BJ (cell line): ENCODE measurements at regions of chr6 and their contacts with region 1.

Region 1: GRCh38 chr6:137830511-137830911 is 36.5 kb upstream of the TNFAIP3 start:
- DNase-seq: no peak
- H3K4me3 ChIP-seq: no peak overlapping the region
- H3K27me3 ChIP-seq: no peaks in the 10 kb centered on the region
- CTCF ChIP-seq: no peak

Region 2: GRCh38 chr6:137722749-137723272 is 107.7 kb before region 1 on chr6:
- CTCF ChIA-PET with region 1: no interaction called
- POLR2A ChIA-PET with region 1: interaction called, 11 read pairs
- DNase-seq: no peak
- H3K4me3 ChIP-seq: no peak overlapping the region
- H3K27me3 ChIP-seq: no peaks in the 10 kb centered on the region
- CTCF ChIP-seq: no peak

Region 3: DNA sequence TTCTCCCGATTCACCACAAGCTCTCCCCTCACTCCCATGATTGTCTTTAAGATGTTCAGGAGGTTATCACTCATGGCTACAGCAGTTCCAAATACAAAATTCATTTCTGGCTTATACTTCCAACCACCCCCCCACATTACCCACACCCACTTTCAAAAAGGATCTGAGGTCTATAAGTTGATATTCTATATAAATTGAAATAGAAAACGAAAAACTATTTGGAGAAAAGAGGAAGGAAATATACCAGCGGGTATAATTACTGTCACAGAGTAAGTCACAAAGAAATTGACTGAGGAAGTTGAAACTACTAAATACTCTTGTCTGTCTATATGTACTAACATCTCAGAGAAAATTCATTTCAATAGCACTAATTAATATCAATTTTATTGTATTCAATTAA is 76.1 kb before region 1 on chr6:
- CTCF ChIA-PET with region 1: no interaction called
- POLR2A ChIA-PET with region 1: no interaction called
- DNase-seq: no peak
- H3K4me3 ChIP-seq: no peak overlapping the region
- H3K27me3 ChIP-seq: no peaks in the 10 kb centered on the region
- CTCF ChIP-seq: no peak